CD8-positive, alpha-beta T cell (primary cell): ENCODE measurements at regions of chr15 and their contacts with region 1.

Region 1: DNA sequence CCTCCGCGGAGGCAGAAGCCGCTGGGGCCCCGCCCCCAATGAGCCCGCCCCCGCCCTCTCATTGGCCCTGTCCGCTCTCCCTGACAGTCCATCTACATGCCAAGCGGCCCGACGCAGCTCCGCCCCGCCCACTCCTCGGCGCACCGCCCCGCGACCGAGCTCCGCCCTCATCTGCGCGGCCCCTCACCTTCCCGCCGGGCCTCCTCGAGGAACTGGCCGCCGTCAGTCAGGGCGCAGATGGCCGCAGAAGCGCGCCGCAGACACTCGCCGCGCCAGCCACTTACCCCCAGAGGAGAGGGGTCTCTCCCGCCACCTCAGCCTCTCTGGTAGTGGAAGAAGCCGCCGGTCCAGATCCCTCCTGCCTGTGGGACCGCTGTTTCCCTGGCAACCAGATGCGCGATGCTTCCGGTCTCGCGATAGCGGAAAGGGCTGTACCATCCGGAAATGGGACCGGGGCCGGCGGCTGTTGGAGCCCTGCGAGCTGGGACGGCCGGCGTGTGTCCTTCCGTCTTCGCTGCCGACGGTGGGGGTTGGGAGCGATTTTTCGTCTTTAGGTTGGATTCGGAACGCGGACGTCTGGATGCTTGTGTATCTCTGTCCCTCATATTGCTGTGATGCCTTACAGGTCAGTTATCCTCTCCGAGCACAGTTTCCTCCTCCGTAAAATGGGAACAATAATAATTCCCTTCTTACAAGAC is at the start of gene FSIP1:
- DNase-seq: peak; percentile 91 to 97 (median 94)
- ATAC-seq: peak; percentile 98
- H3K4me3 ChIP-seq: peak within 1 kb of the TSS; percentile 71 to 95
- H3K4me3 Mint-ChIP-seq: peak within 1 kb of the TSS; percentile 85
- H3K27ac ChIP-seq: peak within 1 kb of the TSS; percentile 68 to 82
- H3K27ac Mint-ChIP-seq: peak within 1 kb of the TSS; percentile 87
- H3K4me1 ChIP-seq: peaks cover 20% of the 10 kb centered on the region
- H3K4me1 Mint-ChIP-seq: peaks cover 50% of the 10 kb centered on the region
- H3K27me3 ChIP-seq: no peaks in the 10 kb centered on the region
- H3K27me3 Mint-ChIP-seq: no peaks in the 10 kb centered on the region
- CTCF ChIP-seq: no peak
- total RNA-seq, gene FSIP1: 0.22 to 0.64 TPM

Region 2: GRCh38 chr15:38453971-38454695 is 1328.5 kb before region 1 on chr15 and contains the start of gene FAM98B:
- CTCF ChIA-PET with region 1: no interaction called
- POLR2A ChIA-PET with region 1: no interaction called
- intact Hi-C with region 1: loop called in 1 of 2 experiments (anchors 1 kb)
- DNase-seq: peak; percentile 80 to 95 (median 87)
- ATAC-seq: peak; percentile 89
- H3K4me3 ChIP-seq: peak within 1 kb of the TSS; percentile 84 to 87
- H3K4me3 Mint-ChIP-seq: peak within 1 kb of the TSS; percentile 98
- H3K27ac ChIP-seq: peak within 1 kb of the TSS; percentile 79 to 88
- H3K27ac Mint-ChIP-seq: peak within 1 kb of the TSS; percentile 99
- H3K4me1 ChIP-seq: peaks cover 19% of the 10 kb centered on the region
- H3K4me1 Mint-ChIP-seq: peaks cover 39% of the 10 kb centered on the region
- H3K27me3 ChIP-seq: no peaks in the 10 kb centered on the region
- H3K27me3 Mint-ChIP-seq: no peaks in the 10 kb centered on the region
- CTCF ChIP-seq: no peak
- total RNA-seq, gene FAM98B: 18.4 to 19.4 TPM

Region 3: GRCh38 chr15:39624806-39625205 is 157.8 kb before region 1 on chr15:
- CTCF ChIA-PET with region 1: no interaction called
- POLR2A ChIA-PET with region 1: no interaction called
- intact Hi-C with region 1: loop called in 1 of 2 experiments (anchors 2 kb)
- DNase-seq: peak; percentile 46 to 92 (median 76)
- ATAC-seq: peak; percentile 55
- H3K4me3 ChIP-seq: no peak overlapping the region
- H3K4me3 Mint-ChIP-seq: peak overlapping the region; percentile 70
- H3K27ac ChIP-seq: peak overlapping the region; percentile 54 to 88
- H3K27ac Mint-ChIP-seq: peak overlapping the region; percentile 99
- H3K4me1 ChIP-seq: peaks cover 71% of the 10 kb centered on the region
- H3K4me1 Mint-ChIP-seq: peaks cover 77% of the 10 kb centered on the region
- H3K27me3 ChIP-seq: no peaks in the 10 kb centered on the region
- H3K27me3 Mint-ChIP-seq: no peaks in the 10 kb centered on the region
- CTCF ChIP-seq: no peak

Region 4: GRCh38 chr15:39833515-39833981 is 51.0 kb after region 1 on chr15:
- CTCF ChIA-PET with region 1: no interaction called
- POLR2A ChIA-PET with region 1: no interaction called
- intact Hi-C with region 1: no loop called
- DNase-seq: no peak
- ATAC-seq: no peak
- H3K4me3 ChIP-seq: no peak overlapping the region
- H3K4me3 Mint-ChIP-seq: no peak overlapping the region
- H3K27ac ChIP-seq: no peak overlapping the region
- H3K27ac Mint-ChIP-seq: no peak overlapping the region
- H3K4me1 ChIP-seq: no peaks in the 10 kb centered on the region
- H3K4me1 Mint-ChIP-seq: no peaks in the 10 kb centered on the region
- H3K27me3 ChIP-seq: no peaks in the 10 kb centered on the region
- H3K27me3 Mint-ChIP-seq: peaks cover 21% of the 10 kb centered on the region
- CTCF ChIP-seq: no peak

Region 5: GRCh38 chr15:39920510-39921273 is 138.1 kb after region 1 on chr15:
- CTCF ChIA-PET with region 1: no interaction called
- POLR2A ChIA-PET with region 1: no interaction called
- intact Hi-C with region 1: loop called in 1 of 2 experiments (anchors 5 kb)
- DNase-seq: peak; percentile 57 to 87 (median 76)
- ATAC-seq: peak; percentile 90
- H3K4me3 ChIP-seq: peak overlapping the region; percentile 69 to 72
- H3K4me3 Mint-ChIP-seq: peak overlapping the region; percentile 87
- H3K27ac ChIP-seq: peak overlapping the region in 1 of 2 experiments; percentile 23
- H3K27ac Mint-ChIP-seq: peak overlapping the region; percentile 41
- H3K4me1 ChIP-seq: peaks cover 19% of the 10 kb centered on the region
- H3K4me1 Mint-ChIP-seq: peaks cover 13% of the 10 kb centered on the region
- H3K27me3 ChIP-seq: peaks cover 7 to 22% of the 10 kb centered on the region in 2 experiments
- H3K27me3 Mint-ChIP-seq: peaks cover 19% of the 10 kb centered on the region
- CTCF ChIP-seq: no peak

Region 6: GRCh38 chr15:39966521-39966920 is 183.9 kb after region 1 on chr15:
- CTCF ChIA-PET with region 1: no interaction called
- POLR2A ChIA-PET with region 1: no interaction called
- intact Hi-C with region 1: no loop called
- DNase-seq: peak in 1 of 9 experiments; percentile 6
- ATAC-seq: no peak
- H3K4me3 ChIP-seq: no peak overlapping the region
- H3K4me3 Mint-ChIP-seq: no peak overlapping the region
- H3K27ac ChIP-seq: no peak overlapping the region
- H3K27ac Mint-ChIP-seq: no peak overlapping the region
- H3K4me1 ChIP-seq: no peaks in the 10 kb centered on the region
- H3K4me1 Mint-ChIP-seq: no peaks in the 10 kb centered on the region
- H3K27me3 ChIP-seq: no peaks in the 10 kb centered on the region
- H3K27me3 Mint-ChIP-seq: no peaks in the 10 kb centered on the region
- CTCF ChIP-seq: no peak

Region 7: GRCh38 chr15:40038638-40039543 is 256.3 kb after region 1 on chr15 and contains the start of gene SRP14:
- CTCF ChIA-PET with region 1: no interaction called
- POLR2A ChIA-PET with region 1: interaction called, 3 read pairs
- intact Hi-C with region 1: loop called (anchors 1 to 2 kb)
- DNase-seq: peak; percentile 86 to 96 (median 93)
- ATAC-seq: peak; percentile 94
- H3K4me3 ChIP-seq: peak within 1 kb of the TSS; percentile 92 to 99
- H3K4me3 Mint-ChIP-seq: peak within 1 kb of the TSS; percentile 99
- H3K27ac ChIP-seq: peak within 1 kb of the TSS; percentile 84 to 96
- H3K27ac Mint-ChIP-seq: peak within 1 kb of the TSS; percentile 99
- H3K4me1 ChIP-seq: peaks cover 16% of the 10 kb centered on the region
- H3K4me1 Mint-ChIP-seq: peaks cover 43% of the 10 kb centered on the region
- H3K27me3 ChIP-seq: no peaks in the 10 kb centered on the region
- H3K27me3 Mint-ChIP-seq: no peaks in the 10 kb centered on the region
- CTCF ChIP-seq: no peak
- total RNA-seq, gene SRP14: 133 to 135 TPM

Region 8: GRCh38 chr15:40323239-40323952 is 540.8 kb after region 1 on chr15 and contains the start of gene INAFM2:
- CTCF ChIA-PET with region 1: no interaction called
- POLR2A ChIA-PET with region 1: no interaction called
- intact Hi-C with region 1: loop called (anchors 2 to 5 kb)
- DNase-seq: peak; percentile 79 to 97 (median 93)
- ATAC-seq: peak; percentile 90
- H3K4me3 ChIP-seq: peak within 1 kb of the TSS; percentile 34 to 45
- H3K4me3 Mint-ChIP-seq: peak within 1 kb of the TSS; percentile 80
- H3K27ac ChIP-seq: peak within 1 kb of the TSS in 1 of 2 experiments; percentile 47
- H3K27ac Mint-ChIP-seq: peak within 1 kb of the TSS; percentile 74
- H3K4me1 ChIP-seq: peaks cover 21% of the 10 kb centered on the region
- H3K4me1 Mint-ChIP-seq: peaks cover 22% of the 10 kb centered on the region
- H3K27me3 ChIP-seq: no peaks in the 10 kb centered on the region
- H3K27me3 Mint-ChIP-seq: no peaks in the 10 kb centered on the region
- CTCF ChIP-seq: peak; percentile 60
- total RNA-seq, gene INAFM2: 4.3 to 8.1 TPM

Region 9: DNA sequence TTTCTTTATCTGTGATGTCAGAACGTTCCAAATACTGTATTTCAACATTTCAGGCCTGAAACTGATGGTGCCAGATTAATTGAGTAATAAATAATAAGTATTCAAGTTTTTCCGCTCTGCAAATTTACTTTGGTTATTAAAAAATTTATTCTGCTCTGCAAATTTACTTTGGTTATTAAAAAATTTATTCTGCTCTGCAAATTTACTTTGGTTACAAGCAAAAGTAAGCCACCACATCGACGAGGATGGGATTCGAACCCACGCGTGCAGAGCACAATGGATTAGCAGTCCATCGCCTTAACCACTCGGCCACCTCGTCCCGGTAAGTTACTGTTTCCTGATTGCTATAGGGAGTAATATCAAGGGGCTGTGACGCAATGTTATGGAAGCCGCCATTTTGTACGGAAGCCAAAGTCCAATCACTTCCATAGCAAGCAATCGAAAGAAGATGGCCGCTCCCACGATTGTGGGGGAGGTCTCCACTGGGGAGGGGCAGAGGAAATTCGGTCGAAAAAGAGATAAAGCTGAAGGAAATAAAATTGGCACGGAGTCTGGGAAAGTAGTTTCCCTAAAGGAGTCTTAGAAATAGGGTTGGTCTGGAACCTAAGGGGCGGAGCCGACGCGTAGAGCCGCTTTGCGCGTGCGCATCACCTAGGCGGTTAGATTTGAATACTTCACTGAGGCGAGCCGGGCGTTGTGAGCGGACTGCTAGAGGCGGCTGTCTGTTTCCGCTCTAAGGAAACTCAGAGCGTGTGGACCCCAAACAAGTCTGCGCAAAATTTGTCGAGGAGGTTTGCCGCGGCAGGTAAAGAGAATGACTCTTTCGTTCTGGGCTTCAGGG is 811.2 kb after region 1 on chr15 and contains the start of gene KNL1:
- CTCF ChIA-PET with region 1: no interaction called
- POLR2A ChIA-PET with region 1: no interaction called
- intact Hi-C with region 1: loop called in 1 of 2 experiments (anchors 5 kb)
- DNase-seq: peak; percentile 70 to 96 (median 85)
- ATAC-seq: peak; percentile 83
- H3K4me3 ChIP-seq: peak within 1 kb of the TSS; percentile 76 to 82
- H3K4me3 Mint-ChIP-seq: peak within 1 kb of the TSS; percentile 95
- H3K27ac ChIP-seq: peak within 1 kb of the TSS; percentile 78 to 92
- H3K27ac Mint-ChIP-seq: peak within 1 kb of the TSS; percentile 98
- H3K4me1 ChIP-seq: no peaks in the 10 kb centered on the region
- H3K4me1 Mint-ChIP-seq: peaks cover 20% of the 10 kb centered on the region
- H3K27me3 ChIP-seq: peaks cover 0 to 2% of the 10 kb centered on the region in 2 experiments
- H3K27me3 Mint-ChIP-seq: peaks cover 6% of the 10 kb centered on the region
- CTCF ChIP-seq: no peak
- total RNA-seq, gene KNL1: 0.83 to 0.98 TPM